ENCODE measurements at regions of chr4 and their contacts with region 1.

Region 1: GRCh38 chr4:182325848-182326255 is 82.7 kb downstream of the TENM3 start:
- DNase-seq: peak; percentile 82
- H3K4me3 ChIP-seq: peak overlapping the region in 2 of 4 donors; percentile 3 to 15
- H3K27ac ChIP-seq: peak overlapping the region in 3 of 4 donors; percentile 53 to 74 (median 60)
- H3K4me1 ChIP-seq: peaks cover 0 to 15% (median 0%) of the 10 kb centered on the region in 4 donors
- H3K27me3 ChIP-seq: no peaks in the 10 kb centered on the region
- CTCF ChIP-seq: no peak
- EP300 ChIP-seq: peak in 1 of 4 donors; percentile 54
- POLR2A ChIP-seq: no peak

Region 2: GRCh38 chr4:182056866-182057265 is 269.0 kb before region 1 on chr4:
- intact Hi-C with region 1: no loop called
- DNase-seq: no peak
- H3K4me3 ChIP-seq: no peak overlapping the region
- H3K27ac ChIP-seq: no peak overlapping the region
- H3K4me1 ChIP-seq: no peaks in the 10 kb centered on the region
- H3K27me3 ChIP-seq: no peaks in the 10 kb centered on the region
- CTCF ChIP-seq: no peak
- EP300 ChIP-seq: no peak
- POLR2A ChIP-seq: no peak

Region 3: GRCh38 chr4:182448281-182449151 is 122.7 kb after region 1 on chr4:
- intact Hi-C with region 1: loop called (anchors 5 kb)
- DNase-seq: peak; percentile 98
- H3K4me3 ChIP-seq: peak overlapping the region; percentile 65 to 88 (median 76)
- H3K27ac ChIP-seq: peak overlapping the region; percentile 78 to 92 (median 88)
- H3K4me1 ChIP-seq: peaks cover 0 to 36% (median 21%) of the 10 kb centered on the region in 4 donors
- H3K27me3 ChIP-seq: peaks cover 0 to 13% (median 0%) of the 10 kb centered on the region in 3 donors
- CTCF ChIP-seq: no peak
- EP300 ChIP-seq: peak in 1 of 4 donors; percentile 14
- POLR2A ChIP-seq: no peak

Measured in sigmoid colon (tissue), 7 donors.